Posterior cingulate gyrus (tissue), 11 donors: ENCODE measurements at regions of chr17 and their contacts with region 1.

Region 1: GRCh38 chr17:35849469-35850348 is 19.0 kb downstream of the HEATR9 start:
- DNase-seq: peak in 5 of 10 donors; percentile 25 to 48 (median 43)

Region 2: DNA sequence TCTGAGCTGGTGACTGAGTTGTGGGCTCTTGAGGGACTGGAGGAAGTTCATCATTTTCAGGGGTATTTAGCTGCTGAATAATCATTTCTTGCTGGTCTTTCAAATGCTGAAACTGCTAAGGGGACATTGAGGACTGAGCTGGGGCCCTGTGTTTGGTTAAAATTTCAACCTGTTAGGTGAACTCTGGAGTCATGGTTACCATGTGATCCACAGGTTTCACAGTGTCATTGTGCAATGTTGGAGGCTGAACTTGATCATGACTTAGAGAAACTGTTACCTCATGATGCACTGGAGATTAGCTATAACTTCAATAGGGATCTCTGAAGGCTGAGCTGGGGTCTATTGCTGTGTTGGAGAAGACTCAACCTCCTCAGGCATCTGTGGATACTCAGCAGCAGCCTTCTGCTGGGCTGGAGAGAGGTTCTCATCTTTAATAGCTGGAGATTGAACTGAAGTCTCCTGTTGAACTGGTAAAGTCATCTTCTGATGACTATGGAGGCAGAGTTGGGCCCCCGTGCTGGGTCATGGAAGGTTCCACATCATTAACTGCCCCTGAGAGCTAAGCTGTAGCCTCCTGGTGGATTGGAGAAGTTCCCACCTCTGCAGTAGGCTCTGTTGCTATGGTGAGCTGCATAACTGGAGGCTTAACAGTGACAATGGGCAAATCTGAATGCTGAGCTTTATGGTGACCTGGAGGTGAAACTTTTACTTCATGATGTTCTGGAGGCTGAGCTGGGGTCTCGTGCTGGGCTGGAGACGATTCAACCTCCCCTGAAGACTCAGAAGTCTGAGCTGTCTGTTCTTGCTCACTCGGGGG is 65.7 kb after region 1 on chr17:
- intact Hi-C with region 1: loop called (anchors 10 kb)
- DNase-seq: no peak

Region 3: GRCh38 chr17:36034127-36034526 is 184.4 kb after region 1 on chr17:
- intact Hi-C with region 1: no loop called
- DNase-seq: no peak